Activated T-helper 1 cell treated with anti-CD3 and anti-CD28 coated beads, Interleukin-12 subunit alpha, Interleukin-12 subunit beta, Interleukin-2, Interleukin-4 antibody, amounts not matched to agents 30 ng/mL and 10 ng/mL and 1 ng/mL, durations not matched to agents 14 hours and 24 hours and 36 hours (primary cell): ENCODE measurements at regions of chr5 and their contacts with region 1.

Region 1: GRCh38 chr5:58974083-58974482 is 391.2 kb downstream of the RAB3C start:
- DNase-seq: no peak
- H3K4me3 Mint-ChIP-seq: no peak overlapping the region
- H3K27ac Mint-ChIP-seq: no peak overlapping the region
- H3K4me1 Mint-ChIP-seq: no peaks in the 10 kb centered on the region
- H3K27me3 Mint-ChIP-seq: no peaks in the 10 kb centered on the region

Region 2: DNA sequence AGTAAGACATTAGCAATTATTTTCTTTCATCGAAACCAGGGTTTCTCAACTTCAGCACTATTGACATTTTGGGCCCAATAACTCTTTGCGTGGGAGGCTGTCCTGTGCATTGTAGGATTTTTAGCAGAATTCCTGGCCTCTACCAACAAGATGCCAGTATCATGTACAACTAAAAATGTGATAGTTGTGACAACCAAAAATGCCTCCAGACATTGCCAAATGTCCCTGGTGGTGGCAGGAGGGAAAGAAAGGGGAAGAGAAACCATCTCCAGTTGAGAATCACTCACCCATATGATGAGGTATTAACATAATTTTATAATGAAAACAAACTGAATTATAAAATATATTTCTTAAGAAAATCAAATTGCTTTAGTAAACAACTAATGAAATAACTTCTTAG is 14.9 kb after region 1 on chr5:
- intact Hi-C with region 1: loop called (anchors 2 kb)
- DNase-seq: no peak
- H3K4me3 Mint-ChIP-seq: no peak overlapping the region
- H3K27ac Mint-ChIP-seq: no peak overlapping the region
- H3K4me1 Mint-ChIP-seq: peaks cover 9% of the 10 kb centered on the region
- H3K27me3 Mint-ChIP-seq: no peaks in the 10 kb centered on the region

Region 3: DNA sequence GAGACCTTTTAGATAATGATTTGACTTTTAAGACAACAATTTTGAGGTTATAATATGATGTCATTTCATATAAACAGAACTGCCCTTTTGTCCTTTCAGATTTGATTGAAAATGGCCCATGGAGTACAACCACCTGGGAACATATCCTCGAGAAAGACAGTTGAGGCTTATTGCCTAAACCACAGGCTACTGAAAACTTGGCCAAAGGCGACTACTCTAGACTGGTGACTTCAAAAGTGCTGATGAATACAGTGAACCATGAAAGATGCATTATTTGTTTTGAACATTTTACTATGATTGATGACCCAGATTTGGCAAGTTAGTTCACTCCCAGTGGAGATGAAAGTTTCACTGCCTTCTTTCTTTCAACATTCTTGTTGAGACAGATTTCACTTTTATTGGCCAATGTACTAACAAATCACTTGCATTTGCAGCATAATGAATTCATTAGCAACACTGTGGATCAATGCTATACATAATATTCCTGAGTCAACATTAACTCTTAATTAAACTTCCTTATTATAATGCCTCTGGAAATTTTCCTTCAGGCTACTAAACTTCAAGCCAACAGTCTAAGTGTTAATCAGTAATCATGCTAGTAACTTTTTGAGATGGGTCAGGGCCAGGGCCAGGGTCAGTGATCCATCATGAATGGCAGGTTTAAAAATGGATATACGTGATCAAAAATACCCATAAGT is 89.1 kb after region 1 on chr5:
- intact Hi-C with region 1: no loop called
- DNase-seq: no peak
- H3K4me3 Mint-ChIP-seq: no peak overlapping the region
- H3K27ac Mint-ChIP-seq: no peak overlapping the region
- H3K4me1 Mint-ChIP-seq: peaks cover 7% of the 10 kb centered on the region
- H3K27me3 Mint-ChIP-seq: peaks cover 7% of the 10 kb centered on the region

Region 4: GRCh38 chr5:59640411-59640810 is 666.3 kb after region 1 on chr5:
- intact Hi-C with region 1: no loop called
- DNase-seq: no peak
- H3K4me3 Mint-ChIP-seq: no peak overlapping the region
- H3K27ac Mint-ChIP-seq: no peak overlapping the region
- H3K4me1 Mint-ChIP-seq: peaks cover 10% of the 10 kb centered on the region
- H3K27me3 Mint-ChIP-seq: peaks cover 14% of the 10 kb centered on the region